ENCODE measurements at regions of chrX and their contacts with region 1.

Region 1: DNA sequence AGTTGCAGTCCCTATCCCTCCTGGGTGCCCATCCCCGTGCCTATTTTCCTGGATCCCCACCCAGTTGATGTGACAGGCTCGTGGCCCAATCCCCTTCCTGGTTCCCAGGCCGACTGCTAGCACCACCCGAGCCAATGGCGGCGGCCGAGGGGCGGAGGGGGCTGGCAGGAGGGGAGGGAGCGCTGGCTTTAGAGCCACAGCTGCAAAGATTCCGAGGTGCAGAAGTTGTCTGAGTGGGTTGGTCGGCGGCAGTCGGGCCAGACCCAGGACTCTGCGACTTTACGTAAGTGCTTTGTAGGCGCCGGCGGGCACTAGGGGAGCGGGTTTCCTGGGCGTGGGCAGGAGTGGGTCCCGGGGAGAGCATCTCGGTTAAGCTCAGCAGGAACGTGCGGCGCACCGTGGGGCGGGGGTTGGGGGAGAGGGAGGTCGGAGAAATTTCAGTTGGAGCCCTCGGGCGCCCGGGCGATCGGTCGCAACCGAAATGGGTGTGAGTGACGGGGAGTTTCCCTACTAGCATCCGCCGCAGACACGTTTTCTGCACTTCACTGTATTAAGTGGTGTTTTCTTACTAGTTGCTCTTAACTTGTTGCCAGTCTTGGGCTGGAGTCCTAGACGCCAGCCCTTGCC is at the start of gene PLS3:
- DNase-seq: peak; percentile 81
- H3K4me3 ChIP-seq: peak within 1 kb of the TSS; percentile 66 to 84 (median 67)
- H3K27ac ChIP-seq: peak within 1 kb of the TSS; percentile 91
- H3K4me1 ChIP-seq: peaks cover 28% of the 10 kb centered on the region
- H3K27me3 ChIP-seq: peaks cover 4% of the 10 kb centered on the region
- CTCF ChIP-seq: no peak
- total RNA-seq, gene PLS3: 253 to 393 TPM

Region 2: GRCh38 chrX:115330498-115331168 is 230.5 kb before region 1 on chrX:
- CTCF ChIA-PET with region 1: interaction called, 6 read pairs
- dilution Hi-C with region 1: no loop called
- in situ Hi-C with region 1: loop called in 1 of 2 experiments (anchors 25 kb)
- intact Hi-C with region 1: loop called (anchors 1 kb)
- DNase-seq: peak; percentile 45
- H3K4me3 ChIP-seq: no peak overlapping the region
- H3K27ac ChIP-seq: no peak overlapping the region
- H3K4me1 ChIP-seq: no peaks in the 10 kb centered on the region
- H3K27me3 ChIP-seq: no peaks in the 10 kb centered on the region
- CTCF ChIP-seq: peak; percentile 73 to 84

Region 3: DNA sequence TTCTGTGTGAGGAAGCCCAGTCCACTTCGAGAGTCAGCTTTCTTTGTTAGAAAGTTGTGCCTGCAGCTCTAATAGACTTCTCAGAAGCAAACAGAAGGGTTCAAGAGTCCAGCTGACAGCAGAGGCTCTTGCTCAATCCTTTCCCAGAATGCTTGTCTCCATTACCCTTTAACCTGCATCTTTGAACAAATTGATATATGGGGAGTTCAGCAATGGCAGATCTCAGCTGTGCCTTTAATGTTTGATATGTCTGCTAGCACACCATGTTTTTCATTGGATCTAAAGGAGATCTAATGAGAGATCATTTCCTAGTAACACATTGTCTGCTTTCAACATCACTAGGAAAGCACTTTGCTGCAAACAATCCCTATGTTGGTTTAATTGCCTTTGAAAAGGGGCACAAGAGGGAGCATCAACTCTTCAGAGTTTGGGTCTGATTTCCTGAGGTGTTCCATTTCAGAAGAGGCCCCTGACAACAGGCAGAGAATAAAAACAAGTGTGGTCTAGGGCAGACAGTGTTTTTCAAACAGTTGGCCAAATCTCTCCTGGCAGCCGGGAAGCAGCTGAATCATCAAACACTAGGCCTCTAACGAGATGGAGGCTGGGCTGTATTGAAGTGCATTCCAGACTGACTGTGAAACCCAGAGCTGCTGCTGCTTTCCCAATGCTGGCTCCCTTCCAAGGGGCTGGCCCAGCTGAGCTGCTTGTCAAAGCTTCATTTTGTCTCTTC is 216.0 kb before region 1 on chrX:
- CTCF ChIA-PET with region 1: no interaction called
- dilution Hi-C with region 1: no loop called
- in situ Hi-C with region 1: loop called in 1 of 2 experiments (anchors 25 kb)
- intact Hi-C with region 1: loop called (anchors 5 kb)
- DNase-seq: peak; percentile 85
- H3K4me3 ChIP-seq: no peak overlapping the region
- H3K27ac ChIP-seq: peak overlapping the region; percentile 55
- H3K4me1 ChIP-seq: peaks cover 2% of the 10 kb centered on the region
- H3K27me3 ChIP-seq: no peaks in the 10 kb centered on the region
- CTCF ChIP-seq: no peak

Region 4: GRCh38 chrX:115518113-115518512 is 43.0 kb before region 1 on chrX:
- CTCF ChIA-PET with region 1: no interaction called
- dilution Hi-C with region 1: no loop called
- in situ Hi-C with region 1: no loop called
- intact Hi-C with region 1: loop called (anchors 5 kb)
- DNase-seq: no peak
- H3K4me3 ChIP-seq: no peak overlapping the region
- H3K27ac ChIP-seq: no peak overlapping the region
- H3K4me1 ChIP-seq: no peaks in the 10 kb centered on the region
- H3K27me3 ChIP-seq: no peaks in the 10 kb centered on the region
- CTCF ChIP-seq: no peak

Region 5: GRCh38 chrX:115592997-115593734 is 32.1 kb after region 1 on chrX:
- CTCF ChIA-PET with region 1: interaction called, 7 read pairs
- dilution Hi-C with region 1: no loop called
- in situ Hi-C with region 1: no loop called
- intact Hi-C with region 1: loop called (anchors 1 kb)
- DNase-seq: peak; percentile 70
- H3K4me3 ChIP-seq: peak overlapping the region; percentile 52 to 94 (median 71)
- H3K27ac ChIP-seq: peak overlapping the region; percentile 79
- H3K4me1 ChIP-seq: peaks cover 27% of the 10 kb centered on the region
- H3K27me3 ChIP-seq: no peaks in the 10 kb centered on the region
- CTCF ChIP-seq: no peak

Region 6: GRCh38 chrX:115616943-115617563 is 56.0 kb after region 1 on chrX:
- CTCF ChIA-PET with region 1: no interaction called
- dilution Hi-C with region 1: no loop called
- in situ Hi-C with region 1: no loop called
- intact Hi-C with region 1: no loop called
- DNase-seq: peak; percentile 85
- H3K4me3 ChIP-seq: no peak overlapping the region
- H3K27ac ChIP-seq: peak overlapping the region; percentile 55
- H3K4me1 ChIP-seq: peaks cover 22% of the 10 kb centered on the region
- H3K27me3 ChIP-seq: no peaks in the 10 kb centered on the region
- CTCF ChIP-seq: no peak

Measured in mammary epithelial cell (primary cell).